Naive thymus-derived CD4-positive, alpha-beta T cell (primary cell): ENCODE measurements at regions of chr2 and their contacts with region 1.

Region 1: DNA sequence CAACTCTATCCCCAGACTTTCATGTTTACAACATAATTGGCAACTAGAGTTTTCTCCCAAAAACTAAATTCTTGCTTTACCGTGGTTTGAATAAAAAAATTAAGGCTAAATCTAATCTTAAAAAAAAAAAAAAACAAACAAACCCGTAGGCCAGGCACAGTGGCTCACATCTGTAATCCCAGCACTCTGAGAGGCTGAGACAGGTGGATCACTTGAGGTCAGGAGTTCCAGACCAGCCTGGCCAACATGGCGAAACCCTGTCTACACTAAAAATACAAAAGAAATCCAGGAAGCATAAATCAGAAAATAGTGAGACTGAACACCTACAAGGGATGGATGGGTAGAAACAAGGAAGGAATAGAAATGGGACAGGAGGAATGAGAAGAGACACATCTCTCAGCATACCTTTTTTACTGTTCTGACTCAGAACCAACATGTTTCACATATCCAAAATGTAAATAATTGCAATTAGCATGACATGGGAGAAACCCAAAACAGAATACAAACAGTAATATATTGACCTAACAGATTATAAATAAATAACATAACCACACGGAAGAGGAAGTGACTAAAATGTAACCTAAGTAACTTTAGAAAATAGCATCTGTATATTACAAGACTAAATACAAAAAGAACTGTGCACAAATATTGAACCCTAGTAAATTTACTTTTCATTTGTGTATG is 17.5 kb downstream of the MGAT4A start:
- DNase-seq: no peak
- ATAC-seq: no peak
- H3K4me3 ChIP-seq: no peak overlapping the region
- H3K4me3 Mint-ChIP-seq: peak overlapping the region in 9 of 10 donors; percentile 30 to 81 (median 51)
- H3K27ac ChIP-seq: no peak overlapping the region
- H3K27ac Mint-ChIP-seq: peak overlapping the region in 7 of 9 donors; percentile 61 to 90 (median 89)
- H3K4me1 ChIP-seq: peaks cover 66 to 72% of the 10 kb centered on the region in 2 donors
- H3K4me1 Mint-ChIP-seq: peaks cover 64 to 100% (median 91%) of the 10 kb centered on the region in 7 donors
- H3K27me3 ChIP-seq: no peaks in the 10 kb centered on the region
- H3K27me3 Mint-ChIP-seq: no peaks in the 10 kb centered on the region

Region 2: DNA sequence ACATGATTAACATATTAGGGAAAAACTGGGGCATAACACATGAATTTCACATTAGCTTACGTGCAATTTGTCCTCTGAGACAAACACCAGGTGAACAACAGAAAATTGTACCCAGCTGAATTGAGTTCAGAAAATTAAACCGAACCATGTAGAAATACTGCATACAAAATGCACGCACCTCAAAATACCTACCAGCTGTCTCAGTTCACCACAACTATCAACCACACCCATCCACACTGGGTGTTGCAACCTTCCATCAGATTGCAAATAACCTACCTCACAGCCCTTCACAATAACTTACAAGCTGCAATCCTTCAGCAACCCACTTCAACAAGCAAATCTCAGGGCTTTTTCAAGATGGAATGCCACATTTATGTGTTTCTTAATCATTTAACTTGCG is 49.1 kb before region 1 on chr2:
- CTCF ChIA-PET with region 1: no interaction called
- POLR2A ChIA-PET with region 1: interaction called, 353 read pairs
- intact Hi-C with region 1: loop called in 1 of 2 experiments (anchors 1 kb)
- DNase-seq: peak in 8 of 9 donors; percentile 39 to 88 (median 80)
- ATAC-seq: peak; percentile 83
- H3K4me3 ChIP-seq: peak overlapping the region; percentile 14
- H3K4me3 Mint-ChIP-seq: peak overlapping the region; percentile 56 to 94 (median 80)
- H3K27ac ChIP-seq: peak overlapping the region; percentile 79
- H3K27ac Mint-ChIP-seq: peak overlapping the region; percentile 91 to 99 (median 97)
- H3K4me1 ChIP-seq: peaks cover 51 to 70% of the 10 kb centered on the region in 2 donors
- H3K4me1 Mint-ChIP-seq: peaks cover 35 to 93% (median 75%) of the 10 kb centered on the region in 7 donors
- H3K27me3 ChIP-seq: no peaks in the 10 kb centered on the region
- H3K27me3 Mint-ChIP-seq: no peaks in the 10 kb centered on the region

Region 3: DNA sequence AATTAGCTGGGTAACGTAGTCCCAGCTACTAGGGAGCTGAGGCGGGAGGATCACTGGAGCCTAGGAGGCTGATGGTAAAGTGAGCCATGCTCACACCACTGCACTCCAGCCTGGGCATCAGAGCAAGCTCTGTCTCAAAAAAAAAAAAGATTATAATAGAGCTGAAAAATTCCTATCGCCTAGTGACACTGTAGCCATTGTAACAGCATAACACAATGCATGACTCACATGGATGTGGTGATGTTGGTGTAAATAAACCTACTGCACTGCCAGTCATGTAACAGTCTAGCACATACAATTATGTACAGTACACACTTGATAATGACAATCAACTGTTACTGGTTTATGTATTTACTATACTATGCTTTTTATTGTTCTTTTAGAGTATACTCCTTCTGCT is 22.2 kb before region 1 on chr2:
- CTCF ChIA-PET with region 1: interaction called, 3 read pairs
- POLR2A ChIA-PET with region 1: interaction called, 5 read pairs
- intact Hi-C with region 1: loop called in 1 of 2 experiments (anchors 2 kb)
- DNase-seq: peak in 1 of 9 donors; percentile 14
- ATAC-seq: peak; percentile 52
- H3K4me3 ChIP-seq: no peak overlapping the region
- H3K4me3 Mint-ChIP-seq: peak overlapping the region in 8 of 10 donors; percentile 29 to 71 (median 54)
- H3K27ac ChIP-seq: peak overlapping the region; percentile 7
- H3K27ac Mint-ChIP-seq: peak overlapping the region; percentile 32 to 94 (median 79)
- H3K4me1 ChIP-seq: peaks cover 60 to 61% of the 10 kb centered on the region in 2 donors
- H3K4me1 Mint-ChIP-seq: peaks cover 56 to 97% (median 91%) of the 10 kb centered on the region in 7 donors
- H3K27me3 ChIP-seq: no peaks in the 10 kb centered on the region
- H3K27me3 Mint-ChIP-seq: no peaks in the 10 kb centered on the region

Region 4: DNA sequence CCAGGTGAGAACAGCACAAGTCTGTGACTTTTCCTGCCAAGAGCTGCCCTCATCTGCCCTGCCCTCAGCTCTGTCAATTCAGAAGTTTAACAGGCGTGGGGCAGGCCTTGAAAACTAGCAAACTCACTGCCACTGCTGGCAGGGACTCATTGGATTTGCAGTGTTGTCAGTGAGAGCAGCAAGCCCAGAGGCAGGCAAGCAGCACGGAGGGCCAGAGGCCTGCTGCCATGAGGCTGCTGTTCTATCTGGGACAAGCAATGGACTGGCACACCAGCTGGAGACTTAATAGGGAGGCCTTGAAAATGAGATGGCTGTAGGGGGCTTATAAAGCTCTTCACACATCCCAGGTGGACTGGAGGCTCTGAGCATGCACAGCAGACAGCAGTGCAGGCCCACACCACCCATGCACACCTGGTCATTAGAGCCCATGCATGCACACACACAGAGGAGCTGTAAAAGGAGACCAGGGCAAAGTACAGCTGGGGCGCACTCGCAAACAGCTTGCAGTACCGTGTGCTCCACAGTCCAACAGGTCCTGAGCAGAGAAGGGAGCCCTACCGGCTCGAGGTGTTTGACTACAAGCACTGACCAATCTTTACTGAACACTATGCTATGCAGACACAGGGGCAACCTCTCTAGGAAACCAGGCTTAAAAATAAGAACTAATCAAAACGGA is 11.2 kb before region 1 on chr2:
- CTCF ChIA-PET with region 1: interaction called, 3 read pairs
- POLR2A ChIA-PET with region 1: interaction called, 7 read pairs
- intact Hi-C with region 1: loop called in 1 of 2 experiments (anchors 1 kb)
- DNase-seq: no peak
- ATAC-seq: peak; percentile 26
- H3K4me3 ChIP-seq: no peak overlapping the region
- H3K4me3 Mint-ChIP-seq: peak overlapping the region in 9 of 10 donors; percentile 46 to 77 (median 62)
- H3K27ac ChIP-seq: peak overlapping the region; percentile 62
- H3K27ac Mint-ChIP-seq: peak overlapping the region; percentile 48 to 93 (median 75)
- H3K4me1 ChIP-seq: peaks cover 18 to 56% of the 10 kb centered on the region in 2 donors
- H3K4me1 Mint-ChIP-seq: peaks cover 47 to 92% (median 84%) of the 10 kb centered on the region in 7 donors
- H3K27me3 ChIP-seq: no peaks in the 10 kb centered on the region
- H3K27me3 Mint-ChIP-seq: no peaks in the 10 kb centered on the region